Activated CD4-positive, alpha-beta memory T cell treated with anti-CD3 and anti-CD28 coated beads, Interleukin-2, amount 10 ng/mL, durations not matched to agents 7 days and 5 days (primary cell): ENCODE measurements at regions of chr9 and their contacts with region 1.

Region 1: GRCh38 chr9:127199001-127199791 is 65.4 kb upstream of the GARNL3 start:
- DNase-seq: peak; percentile 85
- H3K4me3 Mint-ChIP-seq: no peak overlapping the region
- H3K27ac Mint-ChIP-seq: no peak overlapping the region
- H3K4me1 Mint-ChIP-seq: peaks cover 9% of the 10 kb centered on the region
- H3K27me3 Mint-ChIP-seq: no peaks in the 10 kb centered on the region

Region 2: DNA sequence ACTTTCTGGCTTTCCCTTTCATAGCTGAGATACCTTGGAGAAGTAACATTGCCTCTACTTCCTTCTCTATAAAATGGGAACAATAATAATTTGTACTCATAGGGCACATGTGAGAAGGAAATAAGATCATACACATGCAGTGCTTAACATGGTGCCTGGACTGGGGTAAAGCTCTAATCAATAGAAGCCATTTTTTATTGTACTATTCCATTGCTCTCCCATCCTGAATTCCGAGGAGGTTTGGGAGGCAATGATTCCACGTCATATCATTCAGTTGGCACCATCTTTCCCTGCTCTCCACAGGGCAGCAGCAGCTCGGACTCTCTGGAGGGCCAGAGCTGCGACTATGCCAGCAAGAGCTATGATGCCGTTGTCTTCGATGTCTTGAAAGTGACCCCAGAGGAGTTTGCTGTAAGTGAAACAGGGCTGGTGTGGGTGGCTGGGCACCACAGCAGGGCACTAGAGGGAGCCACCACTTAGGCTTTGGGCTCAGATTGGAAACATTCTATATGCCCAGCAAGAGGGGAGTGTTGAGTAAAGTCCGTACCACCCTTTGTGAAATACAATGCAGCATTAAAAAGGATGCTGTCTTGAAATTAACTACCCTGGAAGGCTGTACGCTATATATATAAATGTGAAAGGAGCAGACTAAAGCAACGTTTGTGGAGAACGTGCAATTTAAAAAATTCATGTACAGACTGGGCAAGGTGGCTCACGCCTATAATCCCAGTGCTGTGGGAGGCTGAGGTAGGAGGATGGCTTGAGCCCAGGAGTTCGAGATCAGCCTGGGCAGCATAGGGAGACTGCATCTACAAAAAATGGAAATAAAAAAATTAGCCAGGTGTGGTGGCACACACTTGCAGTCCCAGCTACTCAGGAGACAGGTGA is 233.4 kb before region 1 on chr9:
- CTCF ChIA-PET with region 1: interaction called, 30 read pairs
- POLR2A ChIA-PET with region 1: interaction called, 4 read pairs
- DNase-seq: peak; percentile 66
- H3K4me3 Mint-ChIP-seq: no peak overlapping the region
- H3K27ac Mint-ChIP-seq: no peak overlapping the region
- H3K4me1 Mint-ChIP-seq: peaks cover 9% of the 10 kb centered on the region
- H3K27me3 Mint-ChIP-seq: peaks cover 8% of the 10 kb centered on the region

Region 3: GRCh38 chr9:127014216-127014615 is 185.0 kb before region 1 on chr9:
- CTCF ChIA-PET with region 1: no interaction called
- POLR2A ChIA-PET with region 1: no interaction called
- DNase-seq: no peak
- H3K4me3 Mint-ChIP-seq: no peak overlapping the region
- H3K27ac Mint-ChIP-seq: no peak overlapping the region
- H3K4me1 Mint-ChIP-seq: no peaks in the 10 kb centered on the region
- H3K27me3 Mint-ChIP-seq: peaks cover 32% of the 10 kb centered on the region

Region 4: DNA sequence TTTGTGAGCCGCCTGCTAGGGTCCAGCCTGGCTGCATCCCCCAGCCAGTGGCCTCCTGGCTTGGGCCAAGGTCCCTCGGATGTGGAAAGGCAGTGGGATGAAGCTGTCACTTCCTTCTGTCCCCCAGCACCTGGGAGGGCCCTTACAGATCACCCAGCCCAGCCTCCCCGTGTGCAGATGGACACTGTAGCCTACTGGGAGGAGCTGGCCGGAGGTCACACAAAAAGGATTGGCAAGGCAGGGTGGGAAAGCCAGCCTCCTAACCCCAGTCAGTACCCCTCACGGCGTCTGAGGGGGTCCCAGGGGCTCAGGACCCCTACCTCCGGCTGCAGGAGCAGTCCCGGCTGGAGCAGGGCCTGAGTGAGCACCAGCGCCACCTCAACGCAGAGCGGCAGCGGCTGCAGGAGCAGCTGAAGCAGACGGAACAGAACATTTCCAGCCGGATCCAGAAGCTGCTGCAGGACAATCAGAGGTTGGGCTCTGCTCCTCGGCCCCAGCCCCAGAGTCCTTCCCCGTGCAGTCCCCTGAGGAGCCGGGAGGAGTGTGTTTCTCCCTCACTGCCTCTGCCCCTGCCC is 280.4 kb after region 1 on chr9:
- CTCF ChIA-PET with region 1: no interaction called
- POLR2A ChIA-PET with region 1: no interaction called
- DNase-seq: no peak
- H3K4me3 Mint-ChIP-seq: no peak overlapping the region
- H3K27ac Mint-ChIP-seq: no peak overlapping the region
- H3K4me1 Mint-ChIP-seq: no peaks in the 10 kb centered on the region
- H3K27me3 Mint-ChIP-seq: no peaks in the 10 kb centered on the region